Activated T-helper 2 cell treated with anti-CD3 and anti-CD28 coated beads, Interferon-gamma antibody, Interleukin-2, Interleukin-4, amounts not matched to agents 10 μg/mL and 5 μg/mL and 100 μg/mL, durations not matched to agents 14 hours and 24 hours and 36 hours (primary cell): ENCODE measurements at regions of chr2 and their contacts with region 1.

Region 1: GRCh38 chr2:167212014-167212648 is 323.9 kb downstream of the XIRP2 start:
- DNase-seq: no peak
- H3K4me3 Mint-ChIP-seq: no peak overlapping the region
- H3K27ac Mint-ChIP-seq: no peak overlapping the region
- H3K4me1 Mint-ChIP-seq: no peaks in the 10 kb centered on the region
- H3K27me3 Mint-ChIP-seq: no peaks in the 10 kb centered on the region

Region 2: DNA sequence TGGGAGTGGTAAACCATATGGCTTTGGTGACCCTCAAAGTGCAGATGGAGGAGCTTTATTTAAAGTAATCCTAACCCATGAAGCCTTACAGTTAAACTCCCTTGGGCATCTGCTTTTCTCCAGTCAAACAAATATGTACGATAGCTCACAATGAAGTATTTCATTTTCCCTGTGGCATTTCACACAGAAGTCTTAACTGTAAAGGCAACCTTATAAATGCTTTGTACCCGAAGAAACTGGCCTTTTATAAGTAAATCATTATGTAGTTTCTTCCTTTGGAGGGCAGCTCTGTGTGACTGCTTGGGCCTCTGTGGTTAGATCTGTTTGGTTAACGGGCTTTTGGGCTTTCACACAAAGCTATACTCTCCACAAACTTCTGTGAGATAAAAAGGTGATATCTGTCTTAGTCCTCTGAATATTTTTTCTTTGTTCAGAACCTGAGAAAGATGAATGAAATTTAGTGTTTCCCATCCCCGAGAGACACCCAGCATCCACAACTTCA is 1130.9 kb before region 1 on chr2:
- intact Hi-C with region 1: no loop called
- DNase-seq: no peak
- H3K4me3 Mint-ChIP-seq: no peak overlapping the region
- H3K27ac Mint-ChIP-seq: no peak overlapping the region
- H3K4me1 Mint-ChIP-seq: no peaks in the 10 kb centered on the region
- H3K27me3 Mint-ChIP-seq: no peaks in the 10 kb centered on the region

Region 3: GRCh38 chr2:166539340-166540162 is 672.6 kb before region 1 on chr2:
- intact Hi-C with region 1: loop called (anchors 1 kb)
- DNase-seq: no peak
- H3K4me3 Mint-ChIP-seq: no peak overlapping the region
- H3K27ac Mint-ChIP-seq: no peak overlapping the region
- H3K4me1 Mint-ChIP-seq: peaks cover 1% of the 10 kb centered on the region
- H3K27me3 Mint-ChIP-seq: no peaks in the 10 kb centered on the region

Region 4: GRCh38 chr2:167264380-167264779 is 52.2 kb after region 1 on chr2:
- intact Hi-C with region 1: no loop called
- DNase-seq: no peak
- H3K4me3 Mint-ChIP-seq: no peak overlapping the region
- H3K27ac Mint-ChIP-seq: no peak overlapping the region
- H3K4me1 Mint-ChIP-seq: no peaks in the 10 kb centered on the region
- H3K27me3 Mint-ChIP-seq: no peaks in the 10 kb centered on the region